ENCODE measurements at regions of chrX and their contacts with region 1.

Region 1: GRCh38 chrX:118459494-118459893 is 36.1 kb upstream of the DOCK11 start:
- DNase-seq: peak in 8 of 14 experiments; percentile 0 to 65 (median 14)
- ATAC-seq: peak; percentile 67
- H3K4me3 ChIP-seq: no peak overlapping the region
- H3K4me3 Mint-ChIP-seq: no peak overlapping the region
- H3K27ac ChIP-seq: no peak overlapping the region
- H3K27ac Mint-ChIP-seq: no peak overlapping the region
- H3K4me1 ChIP-seq: no peaks in the 10 kb centered on the region
- H3K4me1 Mint-ChIP-seq: peaks cover 6% of the 10 kb centered on the region
- H3K27me3 ChIP-seq: no peaks in the 10 kb centered on the region
- H3K27me3 Mint-ChIP-seq: no peaks in the 10 kb centered on the region
- CTCF ChIP-seq: peak; percentile 59

Region 2: DNA sequence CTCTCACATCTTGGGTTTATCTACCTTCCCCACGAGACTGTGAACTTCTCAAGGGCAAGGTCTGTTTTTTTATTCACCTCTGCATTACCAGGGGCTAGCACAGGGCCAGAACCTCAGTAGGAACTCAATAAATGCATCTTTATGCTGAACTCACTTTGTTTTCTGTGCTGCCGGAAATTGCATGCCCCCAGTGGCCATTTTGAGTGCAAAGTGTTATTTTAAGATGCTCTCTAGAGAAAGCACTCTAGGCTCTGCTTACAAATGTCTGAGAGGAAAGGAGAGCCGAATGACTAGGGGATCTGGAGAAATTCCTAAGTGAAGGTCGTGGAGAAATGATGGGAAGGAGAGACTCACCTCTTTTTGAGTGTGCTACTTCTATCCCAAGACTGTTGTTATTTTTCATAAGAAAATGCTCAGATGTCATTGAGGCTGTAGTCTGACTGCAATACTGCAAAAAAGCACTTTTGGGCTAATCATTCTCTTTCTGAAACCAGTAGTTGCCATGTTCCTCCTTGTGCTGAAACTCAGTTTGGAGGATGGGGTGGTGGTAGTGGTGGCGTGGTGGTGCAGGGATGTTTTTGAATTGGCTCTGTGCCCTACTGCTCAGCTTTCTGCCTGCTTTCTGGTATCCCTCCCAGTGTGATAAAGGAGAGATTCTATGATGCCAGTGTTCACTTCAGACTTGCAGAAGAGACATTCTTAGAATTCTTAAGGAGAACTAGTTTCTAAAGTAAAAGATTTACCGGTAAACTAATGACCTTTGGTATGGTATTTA is 77.4 kb after region 1 on chrX:
- CTCF ChIA-PET with region 1: interaction called, 5 read pairs
- POLR2A ChIA-PET with region 1: interaction called, 6 read pairs
- intact Hi-C with region 1: loop called in 1 of 2 experiments (anchors 2 kb)
- DNase-seq: peak; percentile 19 to 76 (median 38)
- ATAC-seq: peak; percentile 85
- H3K4me3 ChIP-seq: peak overlapping the region; percentile 3
- H3K4me3 Mint-ChIP-seq: peak overlapping the region; percentile 60
- H3K27ac ChIP-seq: peak overlapping the region; percentile 40 to 59
- H3K27ac Mint-ChIP-seq: peak overlapping the region; percentile 86
- H3K4me1 ChIP-seq: peaks cover 34% of the 10 kb centered on the region
- H3K4me1 Mint-ChIP-seq: peaks cover 73% of the 10 kb centered on the region
- H3K27me3 ChIP-seq: no peaks in the 10 kb centered on the region
- H3K27me3 Mint-ChIP-seq: no peaks in the 10 kb centered on the region
- CTCF ChIP-seq: peak; percentile 61

Region 3: GRCh38 chrX:119067023-119067739 is 607.7 kb after region 1 on chrX:
- CTCF ChIA-PET with region 1: no interaction called
- POLR2A ChIA-PET with region 1: no interaction called
- intact Hi-C with region 1: loop called in 1 of 2 experiments (anchors 5 kb)
- DNase-seq: peak in 13 of 14 experiments; percentile 3 to 61 (median 20)
- ATAC-seq: peak; percentile 43
- H3K4me3 ChIP-seq: no peak overlapping the region
- H3K4me3 Mint-ChIP-seq: no peak overlapping the region
- H3K27ac ChIP-seq: no peak overlapping the region
- H3K27ac Mint-ChIP-seq: no peak overlapping the region
- H3K4me1 ChIP-seq: no peaks in the 10 kb centered on the region
- H3K4me1 Mint-ChIP-seq: no peaks in the 10 kb centered on the region
- H3K27me3 ChIP-seq: no peaks in the 10 kb centered on the region
- H3K27me3 Mint-ChIP-seq: no peaks in the 10 kb centered on the region
- CTCF ChIP-seq: peak; percentile 20